Mucosa of descending colon (tissue), 3 donors: ENCODE measurements at regions of chr6 and their contacts with region 1.

Region 1: DNA sequence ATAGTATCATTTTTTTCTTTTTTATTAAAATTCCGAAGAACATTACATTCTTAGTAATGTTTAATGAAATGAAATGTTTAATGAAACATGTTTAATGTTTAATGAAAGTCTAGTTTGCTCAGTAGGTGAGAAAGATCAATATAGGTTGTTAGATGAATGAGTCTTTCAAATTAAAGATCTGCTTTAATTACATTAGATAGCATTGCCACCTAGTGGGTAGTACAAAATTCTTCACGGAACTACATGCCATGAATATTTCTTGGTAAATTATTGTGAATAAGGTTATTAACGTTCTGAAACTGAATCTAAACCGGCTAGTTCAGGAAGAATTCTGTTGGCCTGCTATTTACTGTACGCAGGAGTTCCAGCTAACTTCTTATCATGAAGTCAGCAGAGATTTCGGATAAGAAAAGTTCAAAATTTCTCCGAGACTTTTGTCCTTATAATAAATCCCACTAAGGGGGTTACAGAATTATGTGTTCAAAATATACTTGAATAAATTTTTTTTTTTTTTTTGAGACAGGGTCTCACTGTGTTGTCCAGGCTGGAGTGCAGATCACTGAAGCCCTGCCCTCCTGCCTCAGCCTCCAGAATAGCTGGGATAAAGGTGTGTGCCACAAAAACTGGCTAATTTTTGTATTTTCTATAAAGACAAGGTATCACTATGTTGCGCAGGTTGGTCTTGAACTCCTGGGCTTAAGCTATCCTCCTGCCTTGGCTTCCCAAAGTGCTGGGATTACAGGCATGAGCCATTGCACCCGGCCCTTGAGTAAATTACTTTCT is 7.9 kb upstream of the GMNN start:
- DNase-seq: no peak
- ATAC-seq: peak; percentile 74
- H3K4me3 ChIP-seq: no peak overlapping the region
- H3K4me1 ChIP-seq: peaks cover 2% of the 10 kb centered on the region
- CTCF ChIP-seq: peak; percentile 14

Region 2: GRCh38 chr6:24719125-24719971 is 47.5 kb before region 1 on chr6 and contains the start of gene C6orf62:
- intact Hi-C with region 1: loop called in 1 of 2 experiments (anchors 10 kb)
- DNase-seq: peak; percentile 46 to 56 (median 53)
- ATAC-seq: no peak
- H3K4me3 ChIP-seq: peak within 1 kb of the TSS; percentile 95
- H3K4me1 ChIP-seq: peaks cover 32% of the 10 kb centered on the region
- CTCF ChIP-seq: no peak
- total RNA-seq, gene C6orf62: 70.3 to 85.1 (median 85.1) TPM

Region 3: GRCh38 chr6:24848461-24848860 is 81.6 kb after region 1 on chr6:
- intact Hi-C with region 1: no loop called
- DNase-seq: no peak
- ATAC-seq: no peak
- H3K4me3 ChIP-seq: no peak overlapping the region
- H3K4me1 ChIP-seq: no peaks in the 10 kb centered on the region
- CTCF ChIP-seq: no peak